HepG2 (cell line): ENCODE measurements at regions of chr5 and their contacts with region 1.

Region 1: GRCh38 chr5:7745882-7746610 is 104.9 kb downstream of the CFAP90 start:
- DNase-seq: peak; percentile 41
- ATAC-seq: peak; percentile 82
- H3K4me3 ChIP-seq: no peak overlapping the region
- H3K27ac ChIP-seq: no peak overlapping the region
- H3K4me1 ChIP-seq: no peaks in the 10 kb centered on the region
- H3K27me3 ChIP-seq: peaks cover 0 to 14% of the 10 kb centered on the region in 2 experiments; a peak in 1 of 5 replicates
- CTCF ChIP-seq: peak; percentile 70
- EP300 ChIP-seq: no peak
- POLR2A ChIP-seq: no peak
- RAD21 ChIP-seq: no peak

Region 2: DNA sequence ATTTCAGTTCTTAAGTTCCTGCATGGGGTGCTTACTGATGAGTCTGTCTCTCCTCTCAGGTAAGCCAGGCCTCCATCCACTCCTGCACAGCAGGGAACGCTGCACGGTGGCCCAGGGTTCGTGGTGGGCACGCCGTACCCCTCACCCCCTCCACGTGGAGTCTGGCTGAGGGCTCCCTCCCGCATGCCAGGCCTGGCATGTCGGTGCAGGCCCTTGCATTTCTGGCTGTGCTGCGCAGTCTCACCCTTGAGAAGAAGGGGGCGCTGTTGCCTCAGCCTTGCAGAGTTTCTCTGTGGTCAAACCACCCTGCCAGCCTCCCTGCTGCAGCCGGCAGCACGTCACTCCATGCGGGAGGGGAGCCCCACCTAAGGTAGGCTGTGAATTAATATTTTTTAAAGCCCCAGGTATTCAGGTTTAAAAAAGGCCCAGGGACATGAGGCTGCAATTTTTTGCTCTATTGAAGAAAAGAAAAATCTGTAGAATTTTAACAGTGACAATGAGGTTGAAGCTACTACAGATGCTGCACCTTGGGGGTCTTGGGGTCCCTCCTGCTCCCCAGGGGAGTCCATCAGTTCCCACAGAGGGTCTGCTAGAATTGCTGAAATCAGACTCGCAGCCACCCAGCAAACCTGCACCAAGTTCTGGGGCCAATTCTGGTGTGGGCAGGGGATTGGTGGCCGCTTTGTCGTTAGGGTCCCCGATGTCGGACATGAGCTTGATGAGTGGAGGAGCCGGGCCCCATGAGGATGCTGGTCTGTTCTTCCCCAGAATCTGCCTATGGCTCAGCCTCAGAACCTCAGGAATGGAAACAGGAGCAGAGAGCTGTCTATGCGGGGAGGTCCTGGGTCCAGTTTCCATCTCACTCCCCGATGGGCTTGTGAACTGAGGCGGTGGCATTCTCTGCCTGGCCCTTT is 980.2 kb before region 1 on chr5:
- CTCF ChIA-PET with region 1: no interaction called
- POLR2A ChIA-PET with region 1: no interaction called
- in situ Hi-C with region 1: loop called (anchors 5 kb)
- intact Hi-C with region 1: no loop called
- DNase-seq: peak; percentile 43
- ATAC-seq: peak; percentile 83
- H3K4me3 ChIP-seq: no peak overlapping the region
- H3K27ac ChIP-seq: no peak overlapping the region
- H3K4me1 ChIP-seq: peaks cover 9% of the 10 kb centered on the region; the same call in 1 of the 2 replicates
- H3K27me3 ChIP-seq: no peaks in the 10 kb centered on the region
- CTCF ChIP-seq: peak; percentile 87
- EP300 ChIP-seq: no peak
- POLR2A ChIP-seq: no peak
- RAD21 ChIP-seq: peak; percentile 74

Region 3: DNA sequence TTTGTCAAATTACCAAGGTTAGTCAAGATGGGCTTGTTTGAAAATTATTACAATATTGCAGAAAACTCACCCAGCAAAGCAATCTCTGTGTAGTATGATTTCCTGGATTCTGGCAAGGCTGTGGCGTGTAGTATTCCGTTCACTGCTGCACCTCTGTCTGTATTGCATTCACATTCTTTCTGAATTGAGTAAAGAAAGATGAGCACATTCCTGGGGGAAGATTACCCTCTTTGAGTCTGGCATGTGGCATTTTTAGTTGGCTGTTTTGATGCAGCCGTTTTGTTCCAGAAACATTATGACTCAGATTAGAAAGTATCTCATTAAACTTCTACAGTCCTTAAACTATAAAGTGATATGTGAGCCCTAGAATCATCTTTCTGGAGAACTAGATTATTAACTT is 835.1 kb before region 1 on chr5:
- CTCF ChIA-PET with region 1: no interaction called
- POLR2A ChIA-PET with region 1: no interaction called
- in situ Hi-C with region 1: no loop called
- intact Hi-C with region 1: no loop called
- DNase-seq: no peak
- ATAC-seq: no peak
- H3K4me3 ChIP-seq: no peak overlapping the region
- H3K27ac ChIP-seq: no peak overlapping the region
- H3K4me1 ChIP-seq: 0 out of 2 replicates have a peak, but pooled peaks cover 4% of the 10 kb centered on the region
- H3K27me3 ChIP-seq: peaks cover 0 to 29% of the 10 kb centered on the region in 2 experiments; a peak in 3 of 5 replicates
- CTCF ChIP-seq: no peak
- EP300 ChIP-seq: no peak
- POLR2A ChIP-seq: no peak
- RAD21 ChIP-seq: no peak

Region 4: DNA sequence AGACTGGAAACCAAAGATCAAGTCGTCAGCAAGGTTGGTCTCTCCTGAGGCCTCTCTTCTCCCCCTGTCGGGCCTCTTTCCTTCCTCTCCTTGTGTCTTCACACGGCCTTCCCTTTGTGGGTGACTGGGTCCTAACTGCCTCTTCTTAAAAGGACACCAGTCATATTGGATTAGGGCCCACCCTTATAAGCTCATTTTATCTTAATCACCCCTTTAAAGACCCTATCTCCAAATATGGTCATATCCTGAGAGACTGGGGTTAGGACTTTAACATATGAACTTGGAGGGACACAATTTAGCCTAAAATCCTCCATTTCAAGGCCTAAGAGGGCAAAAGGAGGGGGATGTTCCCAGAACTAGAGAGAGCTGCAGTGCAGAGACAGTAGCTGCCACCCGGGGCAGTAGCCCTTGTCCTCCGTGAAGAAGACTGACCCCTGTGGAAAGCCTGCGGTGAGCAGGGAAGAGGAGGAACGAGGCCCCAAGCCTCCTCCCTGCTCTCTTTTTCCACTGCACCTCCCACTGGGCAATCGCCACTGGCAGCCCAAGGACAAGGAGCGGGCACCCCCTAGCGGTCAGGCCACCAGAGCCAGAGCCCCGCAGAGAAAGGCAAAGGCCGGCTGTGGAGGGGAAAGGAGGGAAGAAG is 70.0 kb after region 1 on chr5:
- CTCF ChIA-PET with region 1: no interaction called
- POLR2A ChIA-PET with region 1: no interaction called
- in situ Hi-C with region 1: no loop called
- intact Hi-C with region 1: no loop called
- DNase-seq: peak; percentile 70
- ATAC-seq: peak; percentile 99
- H3K4me3 ChIP-seq: no peak overlapping the region
- H3K27ac ChIP-seq: no peak overlapping the region
- H3K4me1 ChIP-seq: no peaks in the 10 kb centered on the region
- H3K27me3 ChIP-seq: peaks cover 0 to 28% of the 10 kb centered on the region in 2 experiments; a peak in 3 of 5 replicates
- CTCF ChIP-seq: peak; percentile 92
- EP300 ChIP-seq: no peak
- POLR2A ChIP-seq: no peak
- RAD21 ChIP-seq: peak; percentile 43; the same call in 1 of the 2 replicates